OCI-LY7 (cell line): ENCODE measurements at regions of chr16 and their contacts with region 1.

Region 1: GRCh38 chr16:22001591-22001990 is 675 bp upstream of the PDZD9 start:
- DNase-seq: no peak
- H3K4me3 ChIP-seq: no peak overlapping the region
- H3K27ac ChIP-seq: no peak overlapping the region
- H3K4me1 ChIP-seq: peaks cover 6% of the 10 kb centered on the region
- CTCF ChIP-seq: no peak

Region 2: GRCh38 chr16:21952793-21953540 is 48.6 kb before region 1 on chr16 and contains the start of gene UQCRC2:
- CTCF ChIA-PET with region 1: no interaction called
- POLR2A ChIA-PET with region 1: no interaction called
- intact Hi-C with region 1: loop called (anchors 5 kb)
- DNase-seq: peak; percentile 95
- H3K4me3 ChIP-seq: peak within 1 kb of the TSS; percentile 93
- H3K27ac ChIP-seq: peak within 1 kb of the TSS; percentile 67
- H3K4me1 ChIP-seq: peaks cover 36% of the 10 kb centered on the region
- CTCF ChIP-seq: no peak
- total RNA-seq, gene UQCRC2: 121 and 129 TPM in 2 replicates

Region 3: DNA sequence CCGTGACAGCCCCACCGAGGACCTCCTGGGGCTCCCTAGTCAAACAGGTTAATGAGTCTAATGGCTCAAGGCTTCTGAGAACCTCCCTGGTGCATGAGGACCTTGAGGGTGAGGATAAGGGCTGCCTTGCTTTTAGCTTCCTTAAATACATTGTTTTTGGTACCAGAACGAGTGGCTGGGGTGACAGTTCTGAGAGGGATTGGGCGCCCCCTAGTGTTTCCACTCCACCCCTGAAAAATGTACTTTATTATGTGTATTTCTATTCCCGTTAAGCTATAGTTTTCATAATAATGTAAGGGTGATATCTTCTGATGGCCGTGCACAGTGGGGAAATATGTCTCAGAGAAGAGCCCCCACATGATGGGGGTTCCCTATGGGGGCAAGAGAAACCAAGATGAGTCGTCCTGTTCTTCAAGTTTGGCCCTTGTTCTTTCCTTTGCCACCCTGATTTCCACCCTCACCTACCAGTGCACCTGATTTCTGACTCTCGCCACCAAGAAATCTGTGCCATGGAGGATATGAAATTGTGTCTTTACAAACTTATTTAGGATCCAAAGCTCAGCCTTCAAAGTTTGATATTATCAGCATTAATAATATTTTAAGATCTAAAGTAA is 76.2 kb after region 1 on chr16:
- CTCF ChIA-PET with region 1: interaction called, 5 read pairs
- POLR2A ChIA-PET with region 1: interaction called, 9 read pairs
- intact Hi-C with region 1: loop called (anchors 1 kb)
- DNase-seq: peak; percentile 74
- H3K4me3 ChIP-seq: no peak overlapping the region
- H3K27ac ChIP-seq: no peak overlapping the region
- H3K4me1 ChIP-seq: peaks cover 9% of the 10 kb centered on the region
- CTCF ChIP-seq: peak; percentile 98

Region 4: DNA sequence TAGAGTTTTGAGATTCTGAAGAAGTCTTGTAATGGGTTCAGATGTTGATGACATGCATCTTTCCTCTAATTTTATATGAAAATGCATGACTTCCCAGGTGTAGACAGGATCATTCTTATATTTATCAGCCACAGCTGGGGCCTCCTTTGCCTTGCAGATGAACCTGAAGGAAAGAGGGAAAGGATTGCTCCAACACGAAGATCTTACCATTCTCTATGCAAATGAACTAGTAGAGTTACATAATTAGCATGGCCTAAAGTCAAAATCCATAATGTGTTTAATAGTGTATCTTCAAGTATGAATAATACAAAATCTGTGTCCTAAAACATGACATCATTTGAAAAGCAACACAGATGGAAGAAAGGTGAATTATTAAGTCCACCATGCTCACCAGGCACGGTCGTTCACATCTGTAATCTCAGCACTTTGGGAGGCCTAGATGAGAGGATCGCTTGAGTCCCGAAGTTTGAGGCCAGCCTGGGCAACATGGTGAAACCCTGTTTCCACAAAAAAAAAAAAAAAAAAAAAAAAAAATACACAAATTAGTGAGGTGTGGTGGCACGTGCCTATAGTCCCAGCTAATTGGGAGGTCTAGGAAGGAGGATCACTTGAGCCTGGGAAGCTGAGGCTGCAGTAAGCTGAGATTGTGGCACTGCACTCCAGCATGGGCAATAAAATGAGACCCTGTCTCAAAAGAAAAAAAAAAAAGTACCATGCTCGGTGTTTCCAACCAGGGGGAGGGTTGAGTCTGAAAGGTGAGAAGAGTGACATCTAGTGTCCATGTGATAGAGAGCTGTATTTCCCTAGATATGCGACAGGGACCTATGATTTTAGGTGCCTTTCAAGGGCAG is 97.0 kb after region 1 on chr16:
- CTCF ChIA-PET with region 1: no interaction called
- POLR2A ChIA-PET with region 1: interaction called, 5 read pairs
- intact Hi-C with region 1: loop called (anchors 5 kb)
- DNase-seq: peak; percentile 76
- H3K4me3 ChIP-seq: peak overlapping the region; percentile 22
- H3K27ac ChIP-seq: no peak overlapping the region
- H3K4me1 ChIP-seq: no peaks in the 10 kb centered on the region
- CTCF ChIP-seq: peak; percentile 89